Calu3 (cell line): ENCODE measurements at regions of chr4 and their contacts with region 1.

Region 1: DNA sequence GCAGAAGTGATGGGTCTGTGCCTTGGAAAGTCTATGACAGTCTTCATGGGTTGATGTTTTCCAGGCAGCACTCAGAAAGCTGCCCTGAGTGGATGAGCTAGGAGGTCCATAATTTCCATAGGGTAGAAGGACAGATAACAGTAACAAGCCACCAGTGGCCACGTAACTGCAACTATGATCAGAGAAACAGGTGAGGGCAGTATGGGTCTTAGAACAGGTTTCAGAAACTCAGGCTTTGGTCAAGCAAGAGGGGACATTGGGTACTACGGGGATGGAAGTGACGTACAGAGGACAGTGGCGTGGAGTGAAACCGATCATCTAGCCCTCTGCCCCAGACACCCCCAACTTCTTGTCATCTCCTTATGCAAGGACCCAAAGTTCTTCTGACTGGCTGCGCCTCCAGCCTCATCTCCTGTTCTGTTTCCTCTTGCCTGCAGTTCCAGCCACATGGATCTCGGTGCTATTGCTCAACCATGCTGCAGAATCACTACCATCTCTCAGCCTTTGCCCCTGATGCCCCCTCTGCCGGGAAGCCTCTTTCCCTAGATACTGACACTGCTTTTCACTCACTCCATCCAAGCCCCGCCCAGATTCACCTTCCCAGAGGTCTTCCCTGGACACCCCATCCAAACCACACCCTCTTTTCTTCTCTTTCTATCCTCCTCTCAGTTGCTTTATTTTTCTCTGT is 123.4 kb downstream of the MFAP3L start:
- DNase-seq: no peak
- H3K4me3 Mint-ChIP-seq: no peak overlapping the region
- H3K27ac Mint-ChIP-seq: peak overlapping the region; percentile 45
- H3K4me1 Mint-ChIP-seq: peaks cover 33% of the 10 kb centered on the region
- H3K27me3 Mint-ChIP-seq: no peaks in the 10 kb centered on the region
- CTCF ChIP-seq: no peak

Region 2: DNA sequence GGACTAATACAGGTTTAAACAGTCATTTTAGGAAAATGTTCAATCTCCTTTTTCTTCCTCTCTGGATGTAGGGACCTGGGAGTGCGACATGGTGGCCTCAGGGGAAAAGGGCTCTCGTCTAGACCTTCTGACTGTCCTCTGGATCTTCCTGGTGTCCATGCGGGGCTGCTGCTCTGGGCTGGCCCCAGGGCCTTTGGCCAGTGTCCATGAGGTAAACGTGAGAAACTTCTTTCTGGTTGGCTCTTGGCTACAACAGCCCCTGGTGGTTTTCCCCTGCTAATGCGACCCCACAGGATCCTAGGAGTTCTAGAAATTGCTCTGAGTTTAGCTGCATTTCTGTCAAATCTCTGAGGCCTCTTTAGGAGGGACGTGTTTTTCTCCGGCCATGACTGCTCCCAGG is 37.6 kb after region 1 on chr4:
- CTCF ChIA-PET with region 1: no interaction called
- intact Hi-C with region 1: loop called (anchors 5 kb)
- DNase-seq: no peak
- H3K4me3 Mint-ChIP-seq: no peak overlapping the region
- H3K27ac Mint-ChIP-seq: no peak overlapping the region
- H3K4me1 Mint-ChIP-seq: peaks cover 39% of the 10 kb centered on the region
- H3K27me3 Mint-ChIP-seq: no peaks in the 10 kb centered on the region
- CTCF ChIP-seq: no peak

Region 3: GRCh38 chr4:170008371-170008770 is 105.6 kb after region 1 on chr4:
- CTCF ChIA-PET with region 1: no interaction called
- intact Hi-C with region 1: loop called (anchors 10 kb)
- DNase-seq: peak; percentile 30
- H3K4me3 Mint-ChIP-seq: no peak overlapping the region
- H3K27ac Mint-ChIP-seq: no peak overlapping the region
- H3K4me1 Mint-ChIP-seq: no peaks in the 10 kb centered on the region
- H3K27me3 Mint-ChIP-seq: no peaks in the 10 kb centered on the region
- CTCF ChIP-seq: no peak